Pancreas (tissue), 10 donors: ENCODE measurements at regions of chr21 and their contacts with region 1.

Region 1: GRCh38 chr21:42145569-42146272 is 73.2 kb upstream of the ABCG1 start:
- DNase-seq: peak in 4 of 6 donors; percentile 16 to 64 (median 54)
- ATAC-seq: peak; percentile 77 to 96 (median 91)
- H3K4me3 ChIP-seq: no peak overlapping the region
- H3K27ac ChIP-seq: no peak overlapping the region
- H3K4me1 ChIP-seq: no peaks in the 10 kb centered on the region
- H3K27me3 ChIP-seq: no peaks in the 10 kb centered on the region
- CTCF ChIP-seq: peak; percentile 84 to 91 (median 88)

Region 2: GRCh38 chr21:42258153-42258884 is 112.6 kb after region 1 on chr21:
- intact Hi-C with region 1: loop called (anchors 2 to 10 kb)
- DNase-seq: peak; percentile 53 to 89 (median 76)
- ATAC-seq: peak; percentile 74 to 89 (median 82)
- H3K4me3 ChIP-seq: no peak overlapping the region
- H3K27ac ChIP-seq: no peak overlapping the region
- H3K4me1 ChIP-seq: peaks cover 3 to 6% (median 5%) of the 10 kb centered on the region in 3 donors
- H3K27me3 ChIP-seq: no peaks in the 10 kb centered on the region
- CTCF ChIP-seq: peak; percentile 79 to 86 (median 84)

Region 3: GRCh38 chr21:42449296-42449927 is 303.7 kb after region 1 on chr21:
- intact Hi-C with region 1: loop called in 1 of 3 experiments (anchors 5 kb)
- DNase-seq: no peak
- ATAC-seq: peak in 1 of 4 donors; percentile 5
- H3K4me3 ChIP-seq: no peak overlapping the region
- H3K27ac ChIP-seq: peak overlapping the region in 1 of 4 donors; percentile 27
- H3K4me1 ChIP-seq: no peaks in the 10 kb centered on the region
- H3K27me3 ChIP-seq: no peaks in the 10 kb centered on the region
- CTCF ChIP-seq: no peak